ENCODE measurements at regions of chr3 and their contacts with region 1.

Region 1: GRCh38 chr3:12810013-12810780 is 13.7 kb downstream of the CAND2 start:
- DNase-seq: peak; percentile 81
- ATAC-seq: peak; percentile 100
- H3K4me3 ChIP-seq: peak overlapping the region; percentile 74
- H3K27ac ChIP-seq: no peak overlapping the region; the same call in 1 of the 2 replicates
- H3K4me1 ChIP-seq: peaks cover 2% of the 10 kb centered on the region; the same call in 1 of the 2 replicates
- H3K27me3 ChIP-seq: no peaks in the 10 kb centered on the region
- CTCF ChIP-seq: peak; percentile 67
- POLR2A ChIP-seq: no peak
- RAD21 ChIP-seq: peak; percentile 51

Region 2: GRCh38 chr3:12556671-12557472 is 253.3 kb before region 1 on chr3 and contains the start of gene MKRN2:
- CTCF ChIA-PET with region 1: interaction called, 5 read pairs
- POLR2A ChIA-PET with region 1: no interaction called
- dilution Hi-C with region 1: no loop called
- in situ Hi-C with region 1: no loop called
- intact Hi-C with region 1: loop called (anchors 2 kb)
- DNase-seq: peak; percentile 78
- ATAC-seq: peak; percentile 93
- H3K4me3 ChIP-seq: peak within 1 kb of the TSS; percentile 85
- H3K27ac ChIP-seq: peak within 1 kb of the TSS; percentile 91
- H3K4me1 ChIP-seq: peaks cover 5% of the 10 kb centered on the region
- H3K27me3 ChIP-seq: no peaks in the 10 kb centered on the region
- CTCF ChIP-seq: no peak
- POLR2A ChIP-seq: peak; percentile 93
- RAD21 ChIP-seq: no peak; the same call in 1 of the 2 replicates
- total RNA-seq, gene MKRN2: 65.6 and 65.8 TPM in 2 replicates

Region 3: DNA sequence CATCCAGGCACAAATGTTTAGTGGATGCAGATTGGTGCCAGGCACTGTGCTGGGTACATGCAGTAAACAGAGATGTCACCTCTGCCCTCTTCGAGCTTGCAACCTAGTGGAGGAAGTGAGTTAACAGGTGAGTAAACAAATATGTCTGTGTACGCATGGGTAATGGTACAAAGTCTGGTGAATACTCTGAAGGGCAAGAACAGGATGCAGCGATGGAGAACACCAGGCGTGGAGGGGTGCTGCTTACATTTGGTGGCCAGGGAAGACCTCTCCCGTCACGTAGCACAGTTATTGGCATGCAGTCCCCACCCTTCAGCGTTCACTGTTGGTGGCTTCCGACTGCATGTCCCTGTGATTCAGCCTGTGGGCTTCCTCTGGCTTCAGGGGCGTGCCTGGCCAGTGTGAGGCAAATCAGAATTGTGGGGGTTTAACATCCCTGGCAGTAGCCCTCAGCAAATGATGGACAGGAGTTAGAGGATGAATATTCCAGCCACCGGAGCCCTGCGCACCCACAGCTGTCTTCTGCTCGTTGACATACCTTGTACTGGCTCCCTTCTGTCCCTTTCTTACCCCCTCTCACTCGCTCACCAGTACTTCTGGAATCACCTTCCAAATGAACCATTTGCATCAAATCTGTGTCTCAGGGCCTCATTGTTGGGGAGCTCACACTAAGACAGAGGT is 660.8 kb after region 1 on chr3:
- CTCF ChIA-PET with region 1: no interaction called
- POLR2A ChIA-PET with region 1: no interaction called
- dilution Hi-C with region 1: no loop called
- in situ Hi-C with region 1: no loop called
- intact Hi-C with region 1: no loop called
- DNase-seq: no peak
- ATAC-seq: no peak
- H3K4me3 ChIP-seq: no peak overlapping the region
- H3K27ac ChIP-seq: no peak overlapping the region
- H3K4me1 ChIP-seq: no peaks in the 10 kb centered on the region
- H3K27me3 ChIP-seq: peaks cover 26% of the 10 kb centered on the region
- CTCF ChIP-seq: no peak
- POLR2A ChIP-seq: no peak
- RAD21 ChIP-seq: no peak

Measured in IMR-90 (cell line).